ENCODE measurements at regions of chr1 and their contacts with region 1.

Region 1: GRCh38 chr1:20521960-20522861 is 14.3 kb upstream of the MUL1 start:
- DNase-seq: peak; percentile 83

Region 2: GRCh38 chr1:20633190-20634064 is 111.2 kb after region 1 on chr1 and contains the start of gene PINK1:
- intact Hi-C with region 1: loop called in 1 of 2 experiments (anchors 5 kb)
- DNase-seq: peak; percentile 95
- total RNA-seq, gene PINK1: 64.8 to 95.9 TPM

Region 3: DNA sequence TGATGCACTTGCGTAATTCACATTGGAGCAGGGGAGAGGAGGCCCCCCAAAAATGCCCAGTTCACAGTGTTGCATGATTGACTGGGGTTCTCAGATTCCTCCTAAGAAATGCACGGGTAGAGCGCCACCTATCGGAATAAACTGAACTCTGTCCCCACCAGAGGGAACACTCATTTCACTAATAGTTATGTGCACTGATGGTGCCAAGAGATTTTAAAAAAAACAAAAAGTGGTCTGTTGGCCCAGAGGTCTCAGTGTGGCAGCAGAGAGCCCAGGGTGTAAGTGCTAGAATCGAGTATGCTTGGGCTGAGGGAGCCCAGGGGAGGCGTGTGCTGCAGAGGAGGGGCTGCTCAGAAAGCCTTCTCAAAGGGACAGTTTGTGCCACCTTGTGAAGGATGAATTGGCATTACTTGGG is 118.0 kb after region 1 on chr1:
- intact Hi-C with region 1: loop called (anchors 5 kb)
- DNase-seq: no peak